IMR-90 (cell line): ENCODE measurements at regions of chr17 and their contacts with region 1.

Region 1: GRCh38 chr17:68924786-68925720 is 30.1 kb downstream of the ABCA8 start:
- DNase-seq: no peak
- ATAC-seq: no peak
- H3K4me3 ChIP-seq: no peak overlapping the region
- H3K27ac ChIP-seq: no peak overlapping the region
- H3K4me1 ChIP-seq: no peaks in the 10 kb centered on the region
- H3K27me3 ChIP-seq: no peaks in the 10 kb centered on the region
- CTCF ChIP-seq: no peak
- POLR2A ChIP-seq: no peak
- RAD21 ChIP-seq: no peak

Region 2: DNA sequence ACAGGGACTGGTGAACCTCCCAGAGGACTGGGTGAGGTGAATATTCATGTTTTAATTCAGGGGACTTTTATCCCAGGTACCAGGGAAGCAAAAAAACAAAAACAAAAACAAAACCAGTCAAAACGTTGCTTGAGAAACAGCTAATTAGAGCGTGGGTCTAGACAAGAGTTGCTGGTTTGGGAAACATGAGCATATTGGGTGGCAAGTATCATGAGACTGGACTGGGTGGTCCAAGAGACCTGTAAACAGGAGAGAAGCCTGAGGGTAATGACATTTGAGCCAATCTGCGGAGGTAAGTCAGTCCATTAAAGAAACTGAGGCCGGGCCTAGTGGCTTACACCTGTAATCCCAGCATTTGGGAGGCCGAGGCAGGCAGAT is 1111.3 kb before region 1 on chr17:
- CTCF ChIA-PET with region 1: no interaction called
- POLR2A ChIA-PET with region 1: interaction called, 13 read pairs
- dilution Hi-C with region 1: no loop called
- in situ Hi-C with region 1: no loop called
- intact Hi-C with region 1: no loop called
- DNase-seq: no peak
- ATAC-seq: no peak
- H3K4me3 ChIP-seq: no peak overlapping the region
- H3K27ac ChIP-seq: no peak overlapping the region
- H3K4me1 ChIP-seq: no peaks in the 10 kb centered on the region
- H3K27me3 ChIP-seq: 0 out of 2 replicates have a peak, but pooled peaks cover 1% of the 10 kb centered on the region
- CTCF ChIP-seq: no peak
- POLR2A ChIP-seq: no peak
- RAD21 ChIP-seq: no peak

Region 3: GRCh38 chr17:68909066-68909465 is 16.0 kb before region 1 on chr17:
- CTCF ChIA-PET with region 1: interaction called, 10 read pairs
- POLR2A ChIA-PET with region 1: no interaction called
- dilution Hi-C with region 1: no loop called
- in situ Hi-C with region 1: no loop called
- intact Hi-C with region 1: no loop called
- DNase-seq: peak; percentile 93
- ATAC-seq: peak; percentile 93
- H3K4me3 ChIP-seq: no peak overlapping the region
- H3K27ac ChIP-seq: peak overlapping the region; percentile 76
- H3K4me1 ChIP-seq: peaks cover 13% of the 10 kb centered on the region
- H3K27me3 ChIP-seq: no peaks in the 10 kb centered on the region
- CTCF ChIP-seq: no peak
- POLR2A ChIP-seq: no peak
- RAD21 ChIP-seq: no peak